Caco-2 (cell line): ENCODE measurements at regions of chr16 and their contacts with region 1.

Region 1: GRCh38 chr16:86575754-86576557 is 2.4 kb upstream of the FOXL1 start:
- DNase-seq: peak; percentile 92 to 93
- H3K4me3 ChIP-seq: peak overlapping the region; percentile 49
- H3K4me3 Mint-ChIP-seq: peak overlapping the region; percentile 98
- H3K27ac Mint-ChIP-seq: peak overlapping the region; percentile 85
- H3K4me1 ChIP-seq: peaks cover 12% of the 10 kb centered on the region; the same call in 1 of the 2 replicates
- H3K4me1 Mint-ChIP-seq: peaks cover 12% of the 10 kb centered on the region
- H3K27me3 ChIP-seq: no peaks in the 10 kb centered on the region
- H3K27me3 Mint-ChIP-seq: peaks cover 18% of the 10 kb centered on the region
- CTCF ChIP-seq: peak; percentile 63 to 95

Region 2: DNA sequence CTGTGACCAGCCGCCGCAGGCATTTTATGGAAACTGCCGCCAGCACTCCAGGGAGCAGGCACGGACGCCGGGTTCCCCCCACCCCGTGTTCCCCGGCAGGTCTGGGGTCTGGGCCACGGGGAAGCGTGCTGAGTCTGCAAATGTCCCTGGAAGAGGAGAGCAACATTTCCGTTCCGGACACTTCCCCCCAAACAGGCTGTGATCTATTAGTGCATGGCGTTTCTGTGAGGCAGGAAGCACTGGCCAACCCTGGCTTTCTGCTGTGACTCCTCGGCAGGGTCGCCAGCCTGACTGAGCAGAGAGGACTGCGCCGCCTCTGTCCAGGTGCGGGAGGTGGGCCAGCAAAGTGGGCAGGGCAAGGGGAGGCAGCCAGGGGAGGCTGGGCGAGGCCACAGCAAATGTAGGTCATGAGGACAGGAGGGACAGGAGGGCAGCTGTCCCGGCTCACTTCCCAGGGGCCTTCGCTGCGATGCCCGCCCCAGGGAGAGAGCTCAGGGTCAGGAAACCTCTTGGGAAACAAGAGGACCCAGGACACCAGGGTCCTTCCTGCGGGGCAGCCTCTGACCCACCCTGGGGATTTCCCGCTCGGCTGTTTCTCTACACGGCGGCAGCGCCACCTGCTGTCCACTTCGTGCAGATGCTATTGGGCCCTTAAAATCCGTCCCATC is 56.2 kb before region 1 on chr16:
- CTCF ChIA-PET with region 1: no interaction called
- POLR2A ChIA-PET with region 1: no interaction called
- intact Hi-C with region 1: no loop called
- DNase-seq: peak; percentile 67 to 77
- H3K4me3 ChIP-seq: no peak overlapping the region
- H3K4me3 Mint-ChIP-seq: no peak overlapping the region
- H3K27ac Mint-ChIP-seq: no peak overlapping the region
- H3K4me1 ChIP-seq: no peaks in the 10 kb centered on the region
- H3K4me1 Mint-ChIP-seq: no peaks in the 10 kb centered on the region
- H3K27me3 ChIP-seq: peaks cover 1% of the 10 kb centered on the region; the same call in 1 of the 2 replicates
- H3K27me3 Mint-ChIP-seq: peaks cover 20% of the 10 kb centered on the region
- CTCF ChIP-seq: peak; percentile 94 to 96

Region 3: GRCh38 chr16:86834451-86835035 is 258.6 kb after region 1 on chr16:
- CTCF ChIA-PET with region 1: no interaction called
- POLR2A ChIA-PET with region 1: no interaction called
- intact Hi-C with region 1: loop called (anchors 5 kb)
- DNase-seq: peak in 1 of 2 experiments; percentile 17
- H3K4me3 ChIP-seq: no peak overlapping the region
- H3K4me3 Mint-ChIP-seq: no peak overlapping the region
- H3K27ac Mint-ChIP-seq: no peak overlapping the region
- H3K4me1 ChIP-seq: no peaks in the 10 kb centered on the region
- H3K4me1 Mint-ChIP-seq: no peaks in the 10 kb centered on the region
- H3K27me3 ChIP-seq: no peaks in the 10 kb centered on the region; the same call in 1 of the 2 replicates
- H3K27me3 Mint-ChIP-seq: peaks cover 10% of the 10 kb centered on the region
- CTCF ChIP-seq: peak in 1 of 2 experiments; percentile 10

Region 4: GRCh38 chr16:86874141-86874540 is 298.2 kb after region 1 on chr16:
- CTCF ChIA-PET with region 1: interaction called, 13 read pairs
- POLR2A ChIA-PET with region 1: no interaction called
- intact Hi-C with region 1: no loop called
- DNase-seq: peak in 1 of 2 experiments; percentile 30
- H3K4me3 ChIP-seq: no peak overlapping the region
- H3K4me3 Mint-ChIP-seq: no peak overlapping the region
- H3K27ac Mint-ChIP-seq: no peak overlapping the region
- H3K4me1 ChIP-seq: no peaks in the 10 kb centered on the region
- H3K4me1 Mint-ChIP-seq: no peaks in the 10 kb centered on the region
- H3K27me3 ChIP-seq: no peaks in the 10 kb centered on the region
- H3K27me3 Mint-ChIP-seq: peaks cover 12% of the 10 kb centered on the region
- CTCF ChIP-seq: peak; percentile 41 to 55

Region 5: DNA sequence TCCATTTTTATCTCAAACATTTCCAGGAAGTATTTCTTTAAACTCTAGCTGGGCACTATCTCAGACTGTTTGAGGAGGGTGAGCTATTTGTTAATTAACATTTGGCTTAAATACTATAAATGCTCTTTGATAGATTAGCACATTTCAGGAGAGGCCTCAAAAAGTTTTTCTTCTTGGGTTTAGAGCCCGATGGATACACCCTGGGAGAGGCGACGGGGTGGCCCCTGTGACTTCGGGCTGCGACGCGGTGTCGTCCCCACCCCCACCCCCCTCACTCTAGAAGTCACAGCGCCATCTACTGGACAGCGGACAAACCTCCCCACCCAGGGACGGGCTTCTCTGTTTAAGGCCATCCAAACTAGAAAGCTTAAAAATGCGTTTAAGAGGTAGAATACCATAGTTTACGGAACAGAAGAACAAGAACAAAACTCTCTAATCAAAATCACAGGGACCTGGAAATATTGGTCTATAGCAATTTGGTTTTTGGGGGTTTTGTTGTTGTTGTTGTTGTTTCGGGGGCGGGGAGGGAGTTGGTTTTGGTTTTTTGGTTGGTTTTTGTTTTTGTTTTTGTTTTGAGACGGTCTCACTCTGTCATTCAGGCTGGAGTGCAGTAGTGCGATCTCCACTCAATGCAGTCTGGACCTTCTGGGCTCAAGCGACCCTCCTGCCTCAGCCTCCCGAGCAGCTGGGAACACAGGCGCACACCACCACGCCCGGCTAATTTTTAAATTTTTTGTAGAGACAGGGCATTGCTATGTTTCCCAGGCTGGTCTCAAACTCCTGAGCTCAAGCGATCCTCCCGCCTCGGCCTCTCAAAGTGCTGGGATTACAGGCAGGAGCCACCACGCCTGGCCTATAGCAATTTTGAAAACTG is 486.9 kb after region 1 on chr16:
- CTCF ChIA-PET with region 1: interaction called, 7 read pairs
- POLR2A ChIA-PET with region 1: no interaction called
- intact Hi-C with region 1: loop called (anchors 5 kb)
- DNase-seq: peak; percentile 65 to 80
- H3K4me3 ChIP-seq: no peak overlapping the region
- H3K4me3 Mint-ChIP-seq: no peak overlapping the region
- H3K27ac Mint-ChIP-seq: no peak overlapping the region
- H3K4me1 ChIP-seq: no peaks in the 10 kb centered on the region
- H3K4me1 Mint-ChIP-seq: no peaks in the 10 kb centered on the region
- H3K27me3 ChIP-seq: no peaks in the 10 kb centered on the region
- H3K27me3 Mint-ChIP-seq: peaks cover 26% of the 10 kb centered on the region
- CTCF ChIP-seq: peak; percentile 90 to 92